Activated CD4-positive, alpha-beta T cell treated with anti-CD3 and anti-CD28 coated beads for 36 hours (primary cell): ENCODE measurements at regions of chr16 and their contacts with region 1.

Region 1: DNA sequence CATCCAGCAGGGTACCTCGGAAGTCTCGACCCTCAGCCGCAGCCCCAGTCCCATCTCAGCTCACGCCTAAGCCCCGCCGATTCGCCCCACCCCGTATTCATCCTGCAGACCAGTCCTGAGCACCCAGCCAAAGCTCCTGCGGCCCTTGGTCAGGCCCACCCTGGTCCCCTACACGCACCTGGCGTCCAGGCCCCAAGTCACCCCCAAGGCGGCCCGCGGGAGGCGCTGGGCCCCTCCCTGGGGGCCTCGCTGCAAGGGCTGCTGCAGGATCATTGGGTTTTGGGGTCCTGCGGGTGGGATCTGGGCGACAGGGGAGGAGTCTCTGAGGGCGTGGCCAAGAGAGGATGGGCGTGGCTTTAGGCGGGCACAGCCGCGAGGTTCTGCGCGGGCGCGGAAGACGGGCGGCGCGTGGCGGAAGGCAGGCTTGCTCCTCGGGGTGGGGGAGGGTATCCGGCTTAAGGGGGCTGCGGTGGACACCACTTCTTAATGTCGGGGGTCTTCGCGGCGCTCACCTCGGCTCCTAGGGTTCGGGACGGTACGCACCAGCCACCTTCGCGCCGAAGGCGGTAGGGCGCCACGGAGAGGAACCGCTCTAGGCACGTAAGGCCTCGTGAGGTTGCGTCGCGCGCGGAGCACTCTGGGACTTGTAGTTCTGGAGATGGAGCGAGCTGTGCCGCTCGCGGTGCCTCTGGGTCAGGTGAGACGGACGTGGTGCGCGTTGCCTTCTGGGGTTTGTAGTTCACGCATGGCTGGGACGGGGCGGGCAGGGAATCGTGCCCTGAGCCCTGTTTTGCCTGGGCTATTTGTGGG is at the starts of genes HCFC1R1 and THOC6:
- DNase-seq: peak; percentile 99
- ATAC-seq: peak; percentile 74
- H3K4me3 Mint-ChIP-seq: peak within 1 kb of the TSS; percentile 74
- H3K27ac Mint-ChIP-seq: peak within 1 kb of the TSS; percentile 97
- H3K4me1 Mint-ChIP-seq: peaks cover 50% of the 10 kb centered on the region
- H3K27me3 Mint-ChIP-seq: peaks cover 4% of the 10 kb centered on the region
- total RNA-seq, gene HCFC1R1: 30.0 to 30.7 TPM
- total RNA-seq, gene THOC6: 46.9 to 50.2 TPM

Region 2: DNA sequence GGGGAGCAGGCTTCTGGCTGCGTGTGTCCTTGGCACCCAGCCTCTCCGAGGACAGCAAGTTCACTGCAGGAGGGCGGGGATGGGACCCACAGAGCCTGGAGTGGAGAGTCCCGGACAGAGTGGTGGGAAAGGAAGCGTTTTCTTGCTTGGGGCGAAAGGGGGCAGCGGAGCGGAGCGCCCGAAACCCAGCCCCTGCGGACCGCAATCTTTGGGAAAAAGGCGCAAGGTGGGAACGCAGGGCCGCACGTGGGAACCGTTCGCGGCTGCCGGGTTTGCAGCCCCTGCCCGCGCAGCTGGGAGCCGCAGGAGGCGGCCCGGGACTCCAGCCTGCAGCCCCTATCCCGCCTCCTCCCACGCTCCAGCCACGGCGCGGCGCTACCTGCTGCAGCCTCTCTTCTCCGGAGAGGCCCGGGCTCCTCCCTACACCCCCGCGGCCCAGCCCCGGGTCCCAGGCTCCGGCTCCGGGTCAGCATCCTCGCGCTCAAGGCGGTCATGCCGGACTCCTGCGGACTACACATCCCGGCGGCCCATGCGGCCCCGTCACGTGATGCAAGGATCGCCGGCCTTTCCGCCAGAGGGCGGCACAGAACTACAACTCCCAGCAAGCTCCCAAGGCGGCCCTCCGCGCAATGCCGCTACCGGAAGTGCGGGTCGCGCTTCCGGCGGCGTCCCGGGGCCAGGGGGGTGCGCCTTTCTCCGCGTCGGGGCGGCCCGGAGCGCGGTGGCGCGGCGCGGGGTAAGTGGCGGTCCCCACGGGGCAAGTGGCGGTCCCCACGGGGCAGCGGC is 976.4 kb before region 1 on chr16 and contains the starts of genes NTHL1 and TSC2:
- CTCF ChIA-PET with region 1: no interaction called
- POLR2A ChIA-PET with region 1: no interaction called
- intact Hi-C with region 1: loop called in 1 of 2 experiments (anchors 2 kb)
- DNase-seq: peak; percentile 97
- ATAC-seq: peak; percentile 97
- H3K4me3 Mint-ChIP-seq: peak within 1 kb of the TSS; percentile 89
- H3K27ac Mint-ChIP-seq: peak within 1 kb of the TSS; percentile 85
- H3K4me1 Mint-ChIP-seq: peaks cover 18% of the 10 kb centered on the region
- H3K27me3 Mint-ChIP-seq: no peaks in the 10 kb centered on the region
- total RNA-seq, gene NTHL1: 22.6 to 26.1 TPM
- total RNA-seq, gene TSC2: 49.6 to 72.9 TPM

Region 3: DNA sequence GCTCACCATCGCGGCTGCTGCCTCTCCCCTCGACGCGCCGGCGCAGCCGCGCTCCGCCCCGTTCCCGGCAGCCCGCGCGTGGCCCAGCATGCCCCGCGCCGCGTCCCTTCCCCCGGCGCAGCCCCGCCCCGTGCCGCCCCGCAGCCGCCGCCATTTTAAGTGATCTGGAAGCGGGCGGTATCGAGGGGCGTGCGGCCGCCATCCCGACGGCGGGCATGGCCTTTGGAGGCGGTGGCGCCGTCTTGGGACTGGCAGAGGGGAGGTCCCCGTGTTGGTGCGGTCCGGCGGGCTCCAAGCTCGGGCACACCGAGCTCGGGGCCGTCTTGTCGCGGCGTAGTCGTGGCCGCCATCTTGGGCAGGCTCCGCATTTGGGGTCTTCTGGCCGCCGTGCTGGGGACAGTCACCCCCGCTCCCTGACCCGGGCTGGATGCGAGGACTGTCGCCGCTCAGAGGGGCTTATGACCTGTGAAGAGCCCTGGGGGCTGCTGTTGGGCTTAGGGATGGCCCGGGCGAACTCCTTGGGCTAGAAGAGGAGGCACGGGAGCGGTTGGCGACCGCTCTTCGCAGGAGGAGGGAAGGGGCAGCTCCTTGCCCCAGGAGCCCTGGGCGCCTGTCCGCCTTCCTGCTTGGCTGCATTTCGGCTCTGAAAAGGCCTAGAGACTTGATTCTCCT is 246.5 kb before region 1 on chr16 and contains the start of gene ELOB:
- CTCF ChIA-PET with region 1: no interaction called
- POLR2A ChIA-PET with region 1: no interaction called
- intact Hi-C with region 1: loop called in 1 of 2 experiments (anchors 5 kb)
- DNase-seq: peak; percentile 95
- ATAC-seq: peak; percentile 94
- H3K4me3 Mint-ChIP-seq: peak within 1 kb of the TSS; percentile 95
- H3K27ac Mint-ChIP-seq: peak within 1 kb of the TSS; percentile 96
- H3K4me1 Mint-ChIP-seq: peaks cover 26% of the 10 kb centered on the region
- H3K27me3 Mint-ChIP-seq: no peaks in the 10 kb centered on the region
- total RNA-seq, gene ELOB: 268 to 269 TPM

Region 4: GRCh38 chr16:3003582-3004302 is 20.1 kb before region 1 on chr16:
- CTCF ChIA-PET with region 1: interaction called, 130 read pairs
- POLR2A ChIA-PET with region 1: interaction called, 4 read pairs
- intact Hi-C with region 1: loop called (anchors 1 kb)
- DNase-seq: peak; percentile 99
- ATAC-seq: peak; percentile 100
- H3K4me3 Mint-ChIP-seq: peak overlapping the region; percentile 32
- H3K27ac Mint-ChIP-seq: no peak overlapping the region
- H3K4me1 Mint-ChIP-seq: peaks cover 23% of the 10 kb centered on the region
- H3K27me3 Mint-ChIP-seq: peaks cover 6% of the 10 kb centered on the region

Region 5: GRCh38 chr16:3099732-3100499 is 76.0 kb after region 1 on chr16:
- CTCF ChIA-PET with region 1: interaction called, 3 read pairs
- POLR2A ChIA-PET with region 1: interaction called, 10 read pairs
- intact Hi-C with region 1: loop called in 1 of 2 experiments (anchors 1 kb)
- DNase-seq: peak; percentile 99
- ATAC-seq: peak; percentile 84
- H3K4me3 Mint-ChIP-seq: peak overlapping the region; percentile 68
- H3K27ac Mint-ChIP-seq: peak overlapping the region; percentile 84
- H3K4me1 Mint-ChIP-seq: peaks cover 49% of the 10 kb centered on the region
- H3K27me3 Mint-ChIP-seq: no peaks in the 10 kb centered on the region

Region 6: DNA sequence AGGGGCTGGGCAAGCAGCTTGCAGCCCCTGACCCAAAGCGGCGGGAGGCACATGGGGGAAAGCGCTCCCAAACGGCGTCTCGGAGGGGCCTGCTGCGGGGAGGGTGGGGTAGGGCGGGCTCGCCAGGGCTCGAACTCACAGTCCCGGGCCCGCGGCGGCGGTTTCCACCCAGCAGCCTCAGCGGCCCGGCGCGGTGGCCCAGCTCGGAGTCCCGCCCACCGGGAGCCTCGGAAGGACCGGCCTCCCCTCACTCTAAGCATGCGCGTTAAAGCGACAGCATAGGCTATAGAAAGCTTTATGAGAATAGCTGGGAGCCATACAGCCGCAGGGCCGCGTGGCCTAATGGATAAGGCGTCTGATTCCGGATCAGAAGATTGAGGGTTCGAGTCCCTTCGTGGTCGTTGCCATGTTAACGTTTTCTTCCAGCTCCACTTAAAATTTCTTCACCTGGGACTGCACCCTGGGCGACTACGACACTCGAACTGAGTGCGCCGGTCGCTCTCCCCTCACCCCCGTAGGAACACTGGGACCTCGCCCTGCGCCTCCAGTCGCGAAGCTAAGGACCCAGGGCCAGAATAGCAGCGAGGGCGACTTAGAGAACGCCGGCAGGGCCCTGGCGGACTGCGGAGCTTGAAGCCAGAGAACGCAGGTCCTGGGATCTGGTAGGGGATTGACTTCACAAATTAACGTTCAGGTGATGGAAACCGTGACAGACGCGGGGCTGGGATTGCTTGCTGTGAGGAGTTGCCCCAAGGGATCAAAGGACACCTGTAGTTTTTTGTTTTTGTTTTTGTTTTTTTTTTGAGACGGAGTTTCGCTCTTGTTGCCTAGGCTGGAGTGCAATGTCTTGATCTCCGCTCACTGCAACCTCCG is 126.7 kb after region 1 on chr16:
- CTCF ChIA-PET with region 1: no interaction called
- POLR2A ChIA-PET with region 1: interaction called, 3 read pairs
- intact Hi-C with region 1: loop called in 1 of 2 experiments (anchors 1 kb)
- DNase-seq: peak; percentile 99
- ATAC-seq: peak; percentile 85
- H3K4me3 Mint-ChIP-seq: peak overlapping the region; percentile 79
- H3K27ac Mint-ChIP-seq: peak overlapping the region; percentile 89
- H3K4me1 Mint-ChIP-seq: peaks cover 22% of the 10 kb centered on the region
- H3K27me3 Mint-ChIP-seq: peaks cover 2% of the 10 kb centered on the region

Region 7: GRCh38 chr16:3457434-3458252 is 433.8 kb after region 1 on chr16:
- CTCF ChIA-PET with region 1: no interaction called
- POLR2A ChIA-PET with region 1: no interaction called
- intact Hi-C with region 1: no loop called
- DNase-seq: peak; percentile 93
- ATAC-seq: peak; percentile 86
- H3K4me3 Mint-ChIP-seq: peak overlapping the region; percentile 74
- H3K27ac Mint-ChIP-seq: peak overlapping the region; percentile 83
- H3K4me1 Mint-ChIP-seq: peaks cover 41% of the 10 kb centered on the region
- H3K27me3 Mint-ChIP-seq: no peaks in the 10 kb centered on the region

Region 8: DNA sequence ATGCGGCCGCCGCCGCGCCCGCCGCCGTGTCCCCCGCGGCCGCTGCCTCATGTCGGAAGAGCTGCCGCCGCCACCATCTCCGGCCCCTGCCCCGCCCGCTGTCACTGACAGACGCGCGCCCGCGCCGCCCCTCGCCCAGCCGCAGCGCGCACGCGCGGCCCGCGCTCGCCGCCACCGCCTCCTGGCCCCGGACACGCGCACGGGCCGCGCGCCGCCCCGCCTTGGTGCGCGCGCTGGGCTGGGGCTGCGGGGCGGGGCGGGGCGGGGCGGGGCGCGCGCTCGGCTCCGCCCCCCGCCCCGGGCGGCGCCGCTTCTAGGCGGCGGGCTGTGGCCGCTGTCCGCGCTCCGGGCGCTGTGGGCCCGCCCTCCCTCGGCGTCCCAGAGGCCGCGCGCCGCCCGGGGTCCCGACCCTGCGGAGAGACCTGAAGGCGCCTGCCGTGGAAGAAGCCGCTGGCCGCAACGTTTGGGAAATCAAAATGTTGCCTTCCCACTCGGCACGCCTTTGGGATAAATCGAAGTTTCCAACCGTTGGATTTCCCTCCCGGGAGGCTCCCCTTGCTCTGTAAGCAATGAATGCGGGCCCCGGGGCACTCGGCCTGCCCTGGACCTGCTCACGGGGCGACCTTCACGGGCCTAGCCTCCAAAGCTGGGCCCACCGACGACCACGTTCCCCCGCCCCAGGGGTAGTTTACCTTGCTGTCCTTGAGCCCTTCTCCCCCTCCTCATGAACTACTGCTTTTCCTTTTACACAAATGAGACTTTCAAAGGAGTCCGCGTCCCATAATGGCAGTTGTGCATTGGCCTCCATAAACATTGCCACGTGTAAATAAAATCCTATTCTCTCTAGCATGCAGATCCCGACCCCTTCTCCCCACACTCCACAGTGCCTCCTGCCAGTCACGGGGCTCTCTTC is 1092.7 kb after region 1 on chr16 and contains the start of gene ADCY9:
- CTCF ChIA-PET with region 1: no interaction called
- POLR2A ChIA-PET with region 1: no interaction called
- intact Hi-C with region 1: loop called in 1 of 2 experiments (anchors 5 kb)
- DNase-seq: peak; percentile 86
- ATAC-seq: peak; percentile 75
- H3K4me3 Mint-ChIP-seq: peak within 1 kb of the TSS; percentile 78
- H3K27ac Mint-ChIP-seq: peak within 1 kb of the TSS; percentile 78
- H3K4me1 Mint-ChIP-seq: peaks cover 36% of the 10 kb centered on the region
- H3K27me3 Mint-ChIP-seq: peaks cover 7% of the 10 kb centered on the region
- total RNA-seq, gene ADCY9: 5.3 to 6.2 TPM